ENCODE measurements at regions of chr10 and their contacts with region 1.

Region 1: DNA sequence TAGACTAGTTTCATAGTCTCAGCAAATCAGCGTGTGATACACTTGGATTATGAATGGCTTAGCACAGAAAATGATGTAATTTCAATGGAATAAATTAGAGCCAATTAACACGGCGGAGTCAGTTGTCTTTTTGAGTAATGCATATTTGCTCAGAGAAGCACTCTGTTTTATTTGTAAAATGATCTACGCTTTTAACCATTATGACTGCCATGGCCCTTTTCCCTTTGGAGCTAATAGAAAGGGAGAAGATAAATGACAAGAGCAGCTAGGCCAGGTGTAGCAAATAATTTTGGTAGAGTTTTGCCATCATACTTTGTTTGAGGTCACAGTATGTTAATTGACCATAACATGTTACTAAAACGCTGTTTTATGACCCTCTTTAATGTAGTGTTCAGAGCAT is 86.8 kb downstream of the GPR158 start:
- DNase-seq: no peak
- H3K4me3 ChIP-seq: no peak overlapping the region
- H3K27ac ChIP-seq: no peak overlapping the region
- H3K4me1 ChIP-seq: no peaks in the 10 kb centered on the region
- H3K27me3 ChIP-seq: no peaks in the 10 kb centered on the region
- CTCF ChIP-seq: no peak
- EP300 ChIP-seq: no peak
- POLR2A ChIP-seq: no peak

Region 2: DNA sequence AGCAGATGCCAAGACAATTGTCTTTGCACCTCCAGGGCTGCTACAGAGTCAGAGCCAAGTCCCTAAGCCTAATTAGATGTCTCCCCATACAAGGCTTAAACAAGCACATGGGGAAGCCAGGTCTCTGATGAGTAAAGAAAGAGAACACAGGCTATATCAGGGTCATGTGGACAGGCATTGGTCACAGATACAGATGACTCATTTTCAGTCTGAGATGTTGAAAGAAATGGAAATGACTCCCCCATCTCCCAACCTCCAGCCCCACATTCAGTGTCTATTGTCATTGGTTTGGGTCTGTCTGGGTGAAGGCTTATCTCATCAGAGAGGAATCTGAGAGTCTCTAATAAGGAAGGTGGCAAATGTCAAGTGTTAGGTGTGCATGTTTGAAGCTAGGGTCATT is 1342.7 kb before region 1 on chr10:
- in situ Hi-C with region 1: no loop called
- intact Hi-C with region 1: loop called (anchors 10 kb)
- DNase-seq: no peak
- H3K4me3 ChIP-seq: no peak overlapping the region
- H3K27ac ChIP-seq: no peak overlapping the region
- H3K4me1 ChIP-seq: no peaks in the 10 kb centered on the region
- H3K27me3 ChIP-seq: no peaks in the 10 kb centered on the region
- CTCF ChIP-seq: no peak
- EP300 ChIP-seq: no peak
- POLR2A ChIP-seq: no peak

Region 3: DNA sequence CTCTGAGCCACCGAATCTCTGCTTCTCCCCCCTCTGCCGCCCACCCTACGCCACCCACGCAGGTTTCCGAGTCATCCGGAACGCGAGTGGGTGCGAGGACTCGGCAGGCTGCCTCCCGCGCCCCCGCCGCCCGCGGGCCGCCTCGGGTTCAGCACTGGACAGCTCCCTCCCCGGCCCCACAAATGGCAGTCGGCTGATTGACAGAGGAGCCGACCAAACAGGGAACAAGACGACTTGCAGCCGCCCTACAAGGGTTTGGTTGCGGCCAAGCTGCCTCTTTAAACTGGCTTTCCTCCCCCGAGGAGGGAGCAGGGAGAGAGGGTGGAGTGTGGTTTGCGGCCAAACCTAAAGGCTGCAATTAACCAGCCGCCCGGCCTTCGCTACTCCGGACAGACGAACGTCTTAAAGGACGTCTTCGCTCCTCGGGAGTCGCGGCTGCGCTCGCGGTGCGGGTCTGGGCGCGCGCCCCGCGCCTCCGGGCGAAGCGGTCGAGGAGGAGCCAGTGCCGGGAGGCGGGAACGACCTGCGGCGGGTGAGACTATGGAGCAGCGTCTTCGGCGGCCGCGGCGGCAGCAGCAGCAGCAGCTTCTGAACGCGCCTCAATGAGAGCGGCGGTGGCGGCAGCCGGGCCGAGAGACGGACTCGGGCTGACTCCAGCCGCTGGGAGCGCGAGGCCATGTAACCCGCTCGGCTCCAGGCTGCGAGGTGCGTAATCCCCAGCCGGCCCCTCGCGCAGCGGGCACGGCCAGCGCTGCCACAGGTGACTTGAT is 86.9 kb before region 1 on chr10 and contains the start of gene GPR158:
- in situ Hi-C with region 1: no loop called
- intact Hi-C with region 1: no loop called
- DNase-seq: peak; percentile 86
- H3K4me3 ChIP-seq: peak within 1 kb of the TSS; percentile 18 to 57 (median 38)
- H3K27ac ChIP-seq: peak within 1 kb of the TSS in 2 of 4 donors; percentile 8 to 34
- H3K4me1 ChIP-seq: peaks cover 8 to 22% (median 16%) of the 10 kb centered on the region in 4 donors
- H3K27me3 ChIP-seq: peaks cover 59% of the 10 kb centered on the region
- CTCF ChIP-seq: no peak
- EP300 ChIP-seq: no peak
- POLR2A ChIP-seq: no peak
- total RNA-seq, gene GPR158: 0.16 to 0.27 TPM in 2 of 4 donors, not detected in the others